WTC11 (cell line): ENCODE measurements at regions of chr22 and their contacts with region 1.

Region 1: GRCh38 chr22:38262051-38262795 is 10.6 kb downstream of the TMEM184B start:
- DNase-seq: peak; percentile 78
- ATAC-seq: peak; percentile 85
- H3K4me3 Mint-ChIP-seq: no peak overlapping the region
- H3K27ac Mint-ChIP-seq: peak overlapping the region; percentile 95
- H3K4me1 Mint-ChIP-seq: peaks cover 56% of the 10 kb centered on the region
- H3K27me3 Mint-ChIP-seq: no peaks in the 10 kb centered on the region
- CTCF ChIP-seq: no peak

Region 2: GRCh38 chr22:37716708-37717107 is 545.5 kb before region 1 on chr22:
- CTCF ChIA-PET with region 1: no interaction called
- POLR2A ChIA-PET with region 1: no interaction called
- DNase-seq: no peak
- ATAC-seq: no peak
- H3K4me3 Mint-ChIP-seq: no peak overlapping the region
- H3K27ac Mint-ChIP-seq: peak overlapping the region; percentile 73; the same call in 1 of the 2 replicates
- H3K4me1 Mint-ChIP-seq: no peaks in the 10 kb centered on the region
- H3K27me3 Mint-ChIP-seq: peaks cover 3% of the 10 kb centered on the region; the same call in 1 of the 2 replicates
- CTCF ChIP-seq: no peak

Region 3: DNA sequence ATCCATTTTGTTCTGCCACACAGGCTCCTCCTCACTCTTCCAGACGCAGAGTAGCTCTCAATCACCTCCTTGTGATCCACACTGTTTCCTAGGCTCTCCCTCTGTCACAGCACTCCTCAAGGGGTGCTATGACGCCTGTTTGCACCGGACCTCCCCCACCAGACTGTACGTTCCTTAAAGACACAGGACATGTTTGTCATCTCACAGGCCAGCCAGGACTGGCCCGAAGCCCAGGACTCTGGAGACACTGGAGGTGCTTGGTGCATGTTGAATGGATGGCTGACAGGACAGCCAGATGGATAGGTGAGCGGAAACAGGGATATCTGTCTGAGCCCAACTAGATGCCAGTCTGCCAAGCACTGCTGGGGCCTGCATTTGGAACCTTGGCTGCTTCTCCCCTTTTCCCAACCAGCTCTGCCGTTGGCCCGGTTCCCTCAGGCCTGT is 94.2 kb before region 1 on chr22:
- CTCF ChIA-PET with region 1: no interaction called
- POLR2A ChIA-PET with region 1: no interaction called
- DNase-seq: no peak
- ATAC-seq: no peak
- H3K4me3 Mint-ChIP-seq: no peak overlapping the region
- H3K27ac Mint-ChIP-seq: no peak overlapping the region
- H3K4me1 Mint-ChIP-seq: peaks cover 8% of the 10 kb centered on the region; the same call in 1 of the 2 replicates
- H3K27me3 Mint-ChIP-seq: no peaks in the 10 kb centered on the region
- CTCF ChIP-seq: no peak

Region 4: DNA sequence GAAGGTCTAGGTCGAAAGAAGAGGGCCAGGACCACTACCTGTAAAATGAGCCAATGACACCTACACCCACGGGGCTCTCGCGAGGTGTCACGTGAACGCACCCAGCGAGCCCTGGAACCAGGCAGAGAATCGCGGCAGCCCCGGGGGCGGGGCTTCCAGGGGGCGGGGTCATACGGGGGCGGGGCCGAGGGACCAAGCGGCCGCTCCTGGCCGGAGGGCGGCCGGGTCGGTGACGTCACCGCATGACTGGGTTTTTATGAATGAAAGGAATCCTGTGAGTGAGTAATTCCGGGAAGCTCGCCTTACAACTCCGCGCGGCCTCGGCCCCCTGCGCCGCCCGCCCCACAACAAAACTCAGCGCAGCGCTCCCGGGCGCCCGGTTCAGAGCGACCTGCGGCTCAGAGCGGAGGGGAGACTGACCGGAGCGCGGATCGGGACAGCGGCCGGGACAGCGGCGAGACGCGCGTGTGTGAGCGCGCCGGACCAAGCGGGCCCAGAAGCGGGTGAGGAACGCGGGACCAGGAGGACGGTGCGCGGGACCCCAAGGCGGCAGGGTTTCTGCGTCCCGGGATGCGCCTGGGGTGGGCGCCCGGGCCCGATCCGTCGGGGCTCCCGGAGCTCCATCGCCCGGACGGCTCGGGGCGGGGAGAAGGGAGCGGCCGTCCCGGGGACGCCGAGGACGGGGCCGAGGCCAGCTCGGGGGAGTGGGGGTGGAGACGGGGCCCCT is 60.4 kb before region 1 on chr22 and contains the start of gene MAFF:
- CTCF ChIA-PET with region 1: no interaction called
- POLR2A ChIA-PET with region 1: no interaction called
- DNase-seq: peak; percentile 96
- ATAC-seq: peak; percentile 68
- H3K4me3 Mint-ChIP-seq: peak within 1 kb of the TSS; percentile 83
- H3K27ac Mint-ChIP-seq: peak within 1 kb of the TSS; percentile 25
- H3K4me1 Mint-ChIP-seq: peaks cover 12% of the 10 kb centered on the region
- H3K27me3 Mint-ChIP-seq: peaks cover 54% of the 10 kb centered on the region
- CTCF ChIP-seq: no peak
- total RNA-seq, gene MAFF: 4.6 to 6.1 TPM (median 5.7 TPM) in 3 replicates

Region 5: GRCh38 chr22:38272373-38273134 is 10.3 kb after region 1 on chr22 and contains the start of gene TMEM184B:
- CTCF ChIA-PET with region 1: interaction called, 27 read pairs
- POLR2A ChIA-PET with region 1: no interaction called
- DNase-seq: peak; percentile 76
- ATAC-seq: peak; percentile 62
- H3K4me3 Mint-ChIP-seq: peak within 1 kb of the TSS; percentile 88
- H3K27ac Mint-ChIP-seq: peak within 1 kb of the TSS; percentile 81
- H3K4me1 Mint-ChIP-seq: peaks cover 51% of the 10 kb centered on the region
- H3K27me3 Mint-ChIP-seq: peaks cover 12% of the 10 kb centered on the region
- CTCF ChIP-seq: no peak
- total RNA-seq, gene TMEM184B: 85.9 to 89.7 TPM (median 88.1 TPM) in 3 replicates